ENCODE measurements at regions of chr2 and their contacts with region 1.

Region 1: DNA sequence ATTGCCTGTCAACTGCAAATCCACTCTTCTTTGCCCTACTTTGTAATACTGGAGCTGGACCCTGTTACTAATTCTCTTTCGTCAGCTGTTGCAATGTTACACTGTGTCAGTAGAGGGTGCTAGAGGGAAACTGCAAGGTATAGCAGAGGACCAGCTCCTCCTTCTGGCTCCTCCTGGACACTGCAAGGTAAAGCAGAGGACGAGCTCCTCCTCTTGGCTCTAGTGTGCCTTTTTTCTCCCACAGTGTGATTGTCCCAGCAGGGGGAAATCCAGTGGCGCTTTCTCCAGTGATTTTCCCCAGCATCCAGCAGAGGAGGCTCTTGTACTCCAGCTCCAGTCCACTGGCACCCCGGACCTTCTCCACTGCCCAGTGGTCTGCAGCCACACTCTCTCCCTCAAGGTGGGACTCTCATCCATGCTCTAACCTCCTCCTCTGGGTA is 95.6 kb downstream of the CAPN13 start:
- DNase-seq: peak; percentile 32 to 92
- H3K4me3 ChIP-seq: no peak overlapping the region
- H3K27ac ChIP-seq: no peak overlapping the region
- H3K4me1 ChIP-seq: peaks cover 0 to 3% of the 10 kb centered on the region in 2 donors
- H3K27me3 ChIP-seq: no peaks in the 10 kb centered on the region
- CTCF ChIP-seq: peak; percentile 97 to 99 (median 99)

Region 2: DNA sequence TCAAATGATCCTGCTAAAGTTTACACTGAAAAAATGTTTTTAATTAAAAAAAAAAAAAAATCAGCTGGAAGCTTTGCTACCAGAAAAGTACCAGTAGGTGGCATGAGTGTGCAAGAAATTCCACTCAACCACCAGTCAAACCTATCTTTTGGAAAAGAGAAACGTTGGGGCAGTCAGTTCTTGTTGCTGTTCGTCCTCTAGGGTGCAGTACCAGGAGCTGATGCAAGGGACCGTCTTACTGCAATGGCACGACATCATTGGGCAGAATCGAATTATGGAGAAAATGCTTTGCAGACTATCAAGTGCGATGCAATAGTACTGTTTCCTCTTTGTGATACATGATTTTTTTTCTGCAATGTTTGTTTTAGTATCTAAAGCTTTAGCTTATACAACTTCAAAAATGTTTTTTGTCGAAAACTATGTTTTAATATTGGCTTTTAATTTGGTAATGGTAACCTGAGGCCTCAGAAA is 546.6 kb before region 1 on chr2:
- intact Hi-C with region 1: loop called (anchors 1 kb)
- DNase-seq: peak in 1 of 2 donors; percentile 70
- H3K4me3 ChIP-seq: no peak overlapping the region
- H3K27ac ChIP-seq: no peak overlapping the region
- H3K4me1 ChIP-seq: peaks cover 0 to 2% of the 10 kb centered on the region in 2 donors
- H3K27me3 ChIP-seq: no peaks in the 10 kb centered on the region
- CTCF ChIP-seq: peak; percentile 57 to 85 (median 75)

Region 3: DNA sequence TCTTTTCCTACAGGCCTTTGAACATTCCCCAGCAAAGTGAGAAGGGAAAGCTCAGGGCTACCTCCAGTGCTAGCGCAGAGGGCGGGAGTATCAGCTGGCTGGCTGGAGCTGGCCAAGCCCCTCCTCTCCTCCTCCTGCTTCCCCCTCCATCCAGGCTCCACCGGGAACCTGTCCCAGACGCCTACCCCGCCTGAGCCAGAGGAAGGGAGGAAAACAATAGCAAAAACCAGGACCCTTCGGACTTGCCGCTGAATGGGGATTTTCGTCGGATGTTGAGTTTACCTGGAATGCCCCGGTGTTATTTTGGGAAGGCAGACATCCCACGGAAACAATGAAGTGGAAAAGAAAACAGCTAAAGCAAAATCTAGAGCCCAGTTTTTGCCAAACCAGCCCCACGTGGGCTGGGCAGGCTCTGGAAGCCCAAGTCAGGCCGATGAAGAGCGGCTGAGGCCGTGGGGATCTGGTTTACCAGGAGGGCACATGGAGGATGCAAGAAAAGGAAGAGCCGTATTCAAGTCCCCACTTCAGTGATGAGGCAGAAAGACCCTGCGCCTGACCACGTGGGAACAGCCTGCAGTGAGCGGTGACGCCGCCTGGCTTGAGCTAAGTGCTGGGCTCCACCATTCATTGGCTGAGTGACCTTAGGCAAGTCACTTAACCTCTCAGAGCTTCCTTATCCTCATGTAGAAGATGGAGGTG is 365.0 kb before region 1 on chr2:
- intact Hi-C with region 1: loop called (anchors 5 kb)
- DNase-seq: peak; percentile 19 to 87
- H3K4me3 ChIP-seq: peak overlapping the region; percentile 26 to 32
- H3K27ac ChIP-seq: peak overlapping the region; percentile 58 to 85
- H3K4me1 ChIP-seq: peaks cover 0 to 21% of the 10 kb centered on the region in 2 donors
- H3K27me3 ChIP-seq: no peaks in the 10 kb centered on the region
- CTCF ChIP-seq: no peak

Region 4: GRCh38 chr2:30447149-30448045 is 264.3 kb before region 1 on chr2 and contains the start of gene LCLAT1:
- intact Hi-C with region 1: loop called (anchors 5 kb)
- DNase-seq: peak; percentile 22 to 88
- H3K4me3 ChIP-seq: peak within 1 kb of the TSS; percentile 82 to 87
- H3K27ac ChIP-seq: peak within 1 kb of the TSS; percentile 66 to 70
- H3K4me1 ChIP-seq: peaks cover 4 to 5% of the 10 kb centered on the region in 2 donors
- H3K27me3 ChIP-seq: no peaks in the 10 kb centered on the region
- CTCF ChIP-seq: peak in 1 of 3 experiments; percentile 13
- total RNA-seq, gene LCLAT1: 9.8 TPM

Region 5: DNA sequence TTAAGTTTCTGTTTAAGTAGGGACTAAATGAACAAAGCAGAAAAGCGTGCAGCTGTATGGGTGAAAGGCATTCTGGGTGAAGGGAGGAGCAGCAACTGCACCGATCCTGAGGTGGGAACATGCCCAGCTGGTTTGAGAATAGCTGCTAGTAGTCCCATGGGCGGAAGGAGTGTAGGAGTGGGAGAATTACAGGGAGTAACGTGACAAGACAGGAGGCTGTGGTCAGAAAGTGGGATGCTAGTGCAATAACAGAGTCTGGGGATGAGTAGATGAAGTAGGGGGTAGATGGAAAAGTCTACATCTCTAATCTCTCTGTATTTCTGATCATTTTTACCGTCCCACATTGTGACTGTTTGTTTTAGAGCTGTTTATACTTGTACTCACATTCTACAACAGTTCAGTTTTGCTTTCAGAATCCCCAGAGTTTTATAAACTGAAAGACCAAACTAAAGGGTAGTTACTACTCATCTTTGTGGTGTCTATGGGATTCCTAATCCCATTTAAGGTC is 145.8 kb before region 1 on chr2:
- intact Hi-C with region 1: loop called (anchors 5 kb)
- DNase-seq: no peak
- H3K4me3 ChIP-seq: no peak overlapping the region
- H3K27ac ChIP-seq: peak overlapping the region; percentile 61 to 73
- H3K4me1 ChIP-seq: peaks cover 0 to 10% of the 10 kb centered on the region in 2 donors
- H3K27me3 ChIP-seq: no peaks in the 10 kb centered on the region
- CTCF ChIP-seq: no peak

Region 6: GRCh38 chr2:31140151-31140550 is 428.5 kb after region 1 on chr2:
- intact Hi-C with region 1: no loop called
- DNase-seq: no peak
- H3K4me3 ChIP-seq: no peak overlapping the region
- H3K27ac ChIP-seq: no peak overlapping the region
- H3K4me1 ChIP-seq: peaks cover 8 to 10% of the 10 kb centered on the region in 2 donors
- H3K27me3 ChIP-seq: no peaks in the 10 kb centered on the region
- CTCF ChIP-seq: no peak

Region 7: DNA sequence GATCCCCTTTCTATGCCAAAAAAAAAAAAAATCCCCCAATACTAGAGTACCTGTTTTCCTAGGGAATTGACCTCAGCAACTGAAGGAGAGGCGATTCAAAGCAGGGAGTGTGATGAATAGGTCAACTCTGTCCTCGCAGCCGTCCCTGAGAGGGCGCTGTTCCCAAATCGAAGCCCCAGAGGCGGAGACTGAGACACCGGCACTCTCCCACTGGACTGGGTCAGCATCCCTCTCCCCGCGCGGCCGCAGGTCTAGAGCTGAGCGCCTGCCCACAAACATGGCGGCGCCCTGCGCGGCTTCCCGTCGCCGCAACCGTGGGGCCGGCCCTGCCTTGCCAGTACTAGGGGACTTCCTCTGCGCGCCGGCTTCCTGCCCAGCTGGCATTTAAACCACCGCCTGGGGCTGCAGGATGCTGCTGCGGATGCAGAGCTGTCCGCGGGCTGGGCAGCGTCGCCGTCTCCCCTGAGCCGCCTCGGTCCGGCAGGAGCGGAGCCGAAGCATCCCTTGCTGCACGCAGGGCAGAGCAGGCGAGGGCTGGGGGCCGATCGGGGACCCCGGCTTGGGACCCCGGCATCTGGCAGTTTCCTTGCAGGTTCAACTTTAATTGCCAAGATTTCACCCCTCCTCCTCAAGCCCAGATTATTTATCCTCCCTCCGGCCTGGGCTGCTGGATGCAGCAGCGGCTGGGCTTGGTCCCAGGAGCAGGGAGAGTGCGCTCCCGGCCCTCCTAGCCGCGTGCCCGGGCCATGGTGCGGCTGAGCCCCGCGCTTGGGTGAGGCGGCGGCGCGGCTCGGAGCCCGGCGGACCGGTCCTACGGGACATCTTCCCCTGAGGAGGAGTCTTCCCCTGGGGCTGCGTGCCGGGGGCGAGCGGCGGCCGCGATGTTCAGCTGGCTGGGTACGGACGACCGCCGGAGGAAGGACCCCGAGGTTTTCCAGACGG is 522.3 kb after region 1 on chr2 and contains the start of gene EHD3:
- intact Hi-C with region 1: loop called (anchors 5 kb)
- DNase-seq: peak; percentile 71 to 95
- H3K4me3 ChIP-seq: peak within 1 kb of the TSS; percentile 55 to 77
- H3K27ac ChIP-seq: peak within 1 kb of the TSS; percentile 82 to 99
- H3K4me1 ChIP-seq: peaks cover 19 to 37% of the 10 kb centered on the region in 2 donors
- H3K27me3 ChIP-seq: no peaks in the 10 kb centered on the region
- CTCF ChIP-seq: peak; percentile 61 to 78 (median 71)
- total RNA-seq, gene EHD3: 22.5 TPM